Heart right ventricle (tissue), 16 donors: ENCODE measurements at regions of chr6 and their contacts with region 1.

Region 1: DNA sequence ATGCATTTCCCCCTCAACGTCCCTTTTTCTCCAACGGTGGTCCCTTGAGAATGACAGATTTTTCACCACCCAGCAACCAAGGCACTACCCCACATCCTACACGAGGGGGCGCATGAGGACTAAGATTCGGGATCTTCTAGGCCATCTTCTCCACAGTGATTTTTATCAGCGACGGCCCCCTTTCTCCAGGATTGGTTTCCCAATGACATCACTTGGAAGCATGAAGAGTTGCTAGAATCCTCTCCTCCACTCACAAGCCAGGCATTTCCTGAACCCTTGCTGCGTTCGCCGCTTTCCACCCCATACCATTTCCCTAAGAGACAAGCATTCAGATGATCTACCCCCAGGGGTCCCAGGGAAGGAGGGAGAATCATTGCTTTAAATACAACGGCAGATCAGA is 252.0 kb downstream of the HIVEP2 start:
- DNase-seq: peak; percentile 40 to 71
- ATAC-seq: peak; percentile 69 to 85 (median 77)
- H3K4me3 ChIP-seq: no peak overlapping the region
- H3K27ac ChIP-seq: peak overlapping the region in 3 of 10 donors; percentile 23 to 51 (median 29)
- H3K4me1 ChIP-seq: peaks cover 0 to 34% (median 5%) of the 10 kb centered on the region in 9 donors
- H3K27me3 ChIP-seq: no peaks in the 10 kb centered on the region
- CTCF ChIP-seq: peak; percentile 85 to 98 (median 91)

Region 2: GRCh38 chr6:142561511-142562265 is 131.3 kb before region 1 on chr6:
- intact Hi-C with region 1: no loop called
- DNase-seq: no peak
- ATAC-seq: no peak
- H3K4me3 ChIP-seq: no peak overlapping the region
- H3K27ac ChIP-seq: no peak overlapping the region
- H3K4me1 ChIP-seq: no peaks in the 10 kb centered on the region
- H3K27me3 ChIP-seq: no peaks in the 10 kb centered on the region
- CTCF ChIP-seq: no peak

Region 3: GRCh38 chr6:142952614-142953013 is 259.7 kb after region 1 on chr6:
- intact Hi-C with region 1: loop called in 9 of 10 experiments (anchors 2 to 10 kb)
- DNase-seq: no peak
- ATAC-seq: no peak
- H3K4me3 ChIP-seq: no peak overlapping the region
- H3K27ac ChIP-seq: no peak overlapping the region
- H3K4me1 ChIP-seq: peaks cover 0 to 13% (median 7%) of the 10 kb centered on the region in 9 donors
- H3K27me3 ChIP-seq: no peaks in the 10 kb centered on the region
- CTCF ChIP-seq: no peak

Region 4: GRCh38 chr6:143026696-143027449 is 333.9 kb after region 1 on chr6:
- intact Hi-C with region 1: loop called (anchors 1 to 5 kb)
- DNase-seq: peak; percentile 26 to 27
- ATAC-seq: peak in 6 of 8 donors; percentile 55 to 78 (median 60)
- H3K4me3 ChIP-seq: no peak overlapping the region
- H3K27ac ChIP-seq: no peak overlapping the region
- H3K4me1 ChIP-seq: no peaks in the 10 kb centered on the region
- H3K27me3 ChIP-seq: no peaks in the 10 kb centered on the region
- CTCF ChIP-seq: peak; percentile 47 to 78 (median 70)

Region 5: DNA sequence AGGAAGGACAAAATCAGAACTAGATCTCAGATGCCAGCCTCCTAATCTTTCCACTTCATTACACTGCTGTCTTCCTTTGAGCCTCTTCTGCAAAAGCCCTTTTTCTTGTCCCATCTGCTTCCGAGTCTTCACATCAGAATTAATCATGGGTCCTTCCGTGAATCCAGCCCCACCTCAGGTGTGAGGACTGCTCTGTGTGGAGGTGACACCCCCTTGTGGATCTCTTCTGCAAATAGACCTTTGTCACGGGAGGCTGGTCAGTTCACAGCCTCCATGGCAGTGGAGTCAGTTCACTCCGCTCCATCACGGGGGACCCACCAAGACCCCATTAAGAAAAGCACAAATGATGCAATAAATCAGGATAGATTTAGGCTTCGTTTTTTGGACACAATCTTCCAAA is 586.4 kb after region 1 on chr6:
- intact Hi-C with region 1: loop called in 3 of 10 experiments (anchors 10 kb)
- DNase-seq: no peak
- ATAC-seq: peak in 4 of 8 donors; percentile 59 to 88 (median 71)
- H3K4me3 ChIP-seq: no peak overlapping the region
- H3K27ac ChIP-seq: no peak overlapping the region
- H3K4me1 ChIP-seq: peaks cover 0 to 5% (median 0%) of the 10 kb centered on the region in 9 donors
- H3K27me3 ChIP-seq: no peaks in the 10 kb centered on the region
- CTCF ChIP-seq: peak in 8 of 9 donors; percentile 19 to 60 (median 40)

Region 6: DNA sequence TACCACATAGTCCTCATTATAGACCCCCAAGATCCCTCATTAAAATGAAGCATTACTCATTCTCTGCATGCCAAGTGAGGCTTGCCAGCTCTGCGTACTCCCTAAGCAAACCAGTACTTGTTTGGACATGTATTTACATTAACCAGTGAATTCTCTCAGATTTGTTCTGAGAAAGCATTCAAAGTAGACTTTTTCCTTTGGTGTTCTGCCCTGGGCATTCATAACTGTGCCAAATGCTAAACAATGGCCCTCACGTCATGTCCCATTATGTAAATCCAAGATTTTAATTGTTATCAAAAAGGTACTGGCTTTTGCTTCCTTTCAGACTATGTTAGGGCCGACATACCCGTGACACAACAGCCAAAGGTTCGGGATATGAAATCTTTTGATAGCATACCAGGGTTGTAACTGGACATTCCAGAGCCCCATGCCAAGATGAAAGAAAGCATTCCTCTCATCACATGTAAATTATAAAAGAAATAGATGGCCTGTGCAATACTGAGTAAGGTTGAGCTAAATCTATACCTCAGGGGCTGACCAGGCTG is 593.4 kb after region 1 on chr6:
- intact Hi-C with region 1: loop called in 2 of 10 experiments (anchors 10 kb)
- DNase-seq: no peak
- ATAC-seq: peak in 5 of 8 donors; percentile 35 to 77 (median 63)
- H3K4me3 ChIP-seq: no peak overlapping the region
- H3K27ac ChIP-seq: peak overlapping the region in 1 of 10 donors; percentile 39
- H3K4me1 ChIP-seq: peaks cover 0 to 15% (median 0%) of the 10 kb centered on the region in 9 donors
- H3K27me3 ChIP-seq: no peaks in the 10 kb centered on the region
- CTCF ChIP-seq: no peak